Right lobe of liver (tissue), 6 donors: ENCODE measurements at regions of chr1 and their contacts with region 1.

Region 1: GRCh38 chr1:25796811-25797458 is 3.1 kb upstream of the SELENON start:
- DNase-seq: peak; percentile 86 to 87 (median 86)
- ATAC-seq: peak; percentile 68 to 81 (median 74)
- H3K4me3 ChIP-seq: no peak overlapping the region
- H3K27ac ChIP-seq: peak overlapping the region in 1 of 3 donors; percentile 54
- H3K4me1 ChIP-seq: peaks cover 0 to 10% (median 0%) of the 10 kb centered on the region in 4 donors
- H3K27me3 ChIP-seq: no peaks in the 10 kb centered on the region
- CTCF ChIP-seq: peak; percentile 67 to 86 (median 83)
- POLR2A ChIP-seq: no peak

Region 2: DNA sequence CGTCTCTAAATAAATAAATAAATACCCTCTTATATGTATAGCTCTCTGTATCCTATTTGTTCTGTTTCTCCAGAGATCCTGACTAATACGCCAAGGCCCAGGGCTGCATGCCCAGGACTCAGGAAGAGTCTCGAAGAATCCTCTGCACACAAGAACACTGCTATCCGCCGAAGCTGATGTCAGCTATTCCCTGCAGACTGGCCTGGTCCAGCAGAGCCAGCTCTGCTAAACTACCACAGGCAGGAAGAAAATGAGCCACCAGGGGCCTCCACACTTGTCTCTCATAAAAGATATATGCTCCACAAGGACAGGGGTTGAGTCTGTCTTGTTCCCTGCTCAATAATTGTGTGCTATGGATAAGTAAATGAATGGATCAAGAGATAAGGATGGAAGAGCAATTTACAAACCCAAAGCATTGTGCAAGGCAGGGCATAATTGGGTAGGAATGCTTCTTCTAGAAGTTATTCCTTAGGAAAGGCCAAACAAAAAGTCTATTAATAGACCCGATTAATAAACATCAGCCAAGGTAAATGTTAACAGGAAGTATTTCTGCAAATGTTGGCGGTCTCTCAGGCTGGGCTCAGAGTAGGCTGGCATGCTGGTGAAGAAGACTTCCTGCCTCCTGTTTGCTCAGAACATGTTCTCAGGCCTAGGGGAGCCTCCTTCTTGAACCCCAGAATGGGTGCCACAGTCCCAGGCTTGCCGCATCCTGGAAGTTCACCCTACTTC is 206.7 kb before region 1 on chr1:
- intact Hi-C with region 1: no loop called
- DNase-seq: no peak
- ATAC-seq: peak; percentile 45 to 68 (median 58)
- H3K4me3 ChIP-seq: no peak overlapping the region
- H3K27ac ChIP-seq: no peak overlapping the region
- H3K4me1 ChIP-seq: no peaks in the 10 kb centered on the region
- H3K27me3 ChIP-seq: no peaks in the 10 kb centered on the region
- CTCF ChIP-seq: peak in 1 of 4 donors; percentile 17
- POLR2A ChIP-seq: no peak

Region 3: DNA sequence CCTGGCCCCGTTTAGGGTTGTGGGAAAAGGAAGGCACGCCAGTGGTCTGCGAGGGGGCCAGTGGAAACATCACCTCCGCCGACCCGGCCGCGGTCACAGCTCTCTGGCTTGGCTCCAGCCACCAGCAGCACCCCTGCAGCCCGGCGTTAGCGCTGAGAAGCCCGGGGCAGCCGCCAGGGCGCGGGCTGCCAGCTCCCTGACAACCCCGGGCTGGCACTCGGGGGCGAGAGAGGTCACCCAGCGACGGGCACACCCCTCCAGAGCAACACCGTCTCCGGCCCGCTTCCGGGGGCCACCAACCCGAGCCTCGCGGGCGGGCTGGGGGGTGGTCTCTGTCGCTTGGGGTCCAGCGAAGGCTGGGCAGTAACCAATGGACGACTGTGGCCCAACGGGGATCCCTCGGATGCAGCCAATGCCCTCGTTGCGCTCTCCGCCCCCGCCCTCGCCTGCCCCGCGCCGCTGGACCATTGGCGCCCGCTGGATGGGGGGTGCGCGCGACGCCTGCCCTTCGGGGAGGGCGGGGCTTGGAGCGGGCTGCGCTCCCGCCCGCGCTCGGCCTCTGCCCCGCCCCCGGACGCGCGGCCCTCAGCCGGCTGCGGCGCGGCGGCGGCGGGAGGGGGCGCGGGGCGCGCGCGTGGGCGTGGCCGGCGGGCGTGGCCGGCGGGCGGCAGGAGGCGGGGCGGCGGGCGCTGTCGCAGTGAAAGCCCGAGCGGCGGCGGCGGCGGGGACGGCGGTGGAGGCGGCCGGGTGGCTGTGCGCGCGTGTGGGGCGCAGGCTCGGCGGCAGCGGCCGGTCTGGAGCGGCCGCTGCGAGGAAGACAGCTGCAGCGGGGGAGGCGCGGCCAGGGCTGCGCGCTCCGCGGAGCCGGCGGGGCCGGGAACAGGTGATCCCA is 180.6 kb before region 1 on chr1 and contains the start of gene MAN1C1:
- intact Hi-C with region 1: loop called (anchors 10 kb)
- DNase-seq: peak; percentile 92 to 93 (median 93)
- ATAC-seq: peak; percentile 91 to 95 (median 92)
- H3K4me3 ChIP-seq: peak within 1 kb of the TSS; percentile 80 to 89 (median 82)
- H3K27ac ChIP-seq: peak within 1 kb of the TSS; percentile 36 to 68 (median 65)
- H3K4me1 ChIP-seq: peaks cover 0 to 20% (median 8%) of the 10 kb centered on the region in 4 donors
- H3K27me3 ChIP-seq: no peaks in the 10 kb centered on the region
- CTCF ChIP-seq: peak; percentile 42 to 60 (median 54)
- POLR2A ChIP-seq: peak; percentile 41
- total RNA-seq, gene MAN1C1: 10.7 to 38.8 (median 21.0) TPM

Region 4: DNA sequence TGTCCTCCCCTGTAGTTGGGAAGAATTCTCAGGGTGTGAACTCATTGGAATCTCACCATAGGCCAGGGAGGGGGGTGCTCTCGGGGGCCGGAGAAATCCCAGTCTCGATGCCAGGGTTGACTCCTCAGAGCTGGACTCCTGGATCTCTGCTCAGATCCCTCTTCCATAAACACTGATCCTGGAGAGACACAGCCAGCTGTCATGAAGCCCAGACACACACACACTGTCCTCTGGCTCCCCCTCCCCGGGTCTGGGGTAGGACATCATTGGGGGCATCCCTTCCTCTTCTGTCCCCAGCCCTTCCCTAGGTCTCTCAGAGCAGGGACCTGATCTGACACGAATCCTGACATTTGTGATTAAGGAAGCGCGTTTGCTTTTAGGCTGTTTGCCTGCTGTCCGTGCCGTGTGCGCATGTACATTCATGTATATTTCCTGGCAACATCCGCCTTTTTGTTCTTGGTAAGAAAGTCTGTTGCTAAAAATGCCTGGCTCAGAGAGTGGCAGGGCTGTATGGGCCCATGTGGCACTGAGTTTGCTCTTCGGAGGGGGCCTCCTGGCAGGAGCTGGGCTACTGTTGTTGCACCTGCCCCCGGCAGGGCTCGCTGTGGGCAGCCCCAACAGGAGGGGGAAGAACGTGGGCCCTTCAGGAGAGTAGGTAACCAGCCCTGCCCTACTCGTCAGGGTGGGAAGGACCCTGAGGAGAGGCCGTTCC is 42.3 kb before region 1 on chr1:
- intact Hi-C with region 1: no loop called
- DNase-seq: no peak
- ATAC-seq: no peak
- H3K4me3 ChIP-seq: no peak overlapping the region
- H3K27ac ChIP-seq: no peak overlapping the region
- H3K4me1 ChIP-seq: no peaks in the 10 kb centered on the region
- H3K27me3 ChIP-seq: no peaks in the 10 kb centered on the region
- CTCF ChIP-seq: no peak
- POLR2A ChIP-seq: no peak

Region 5: DNA sequence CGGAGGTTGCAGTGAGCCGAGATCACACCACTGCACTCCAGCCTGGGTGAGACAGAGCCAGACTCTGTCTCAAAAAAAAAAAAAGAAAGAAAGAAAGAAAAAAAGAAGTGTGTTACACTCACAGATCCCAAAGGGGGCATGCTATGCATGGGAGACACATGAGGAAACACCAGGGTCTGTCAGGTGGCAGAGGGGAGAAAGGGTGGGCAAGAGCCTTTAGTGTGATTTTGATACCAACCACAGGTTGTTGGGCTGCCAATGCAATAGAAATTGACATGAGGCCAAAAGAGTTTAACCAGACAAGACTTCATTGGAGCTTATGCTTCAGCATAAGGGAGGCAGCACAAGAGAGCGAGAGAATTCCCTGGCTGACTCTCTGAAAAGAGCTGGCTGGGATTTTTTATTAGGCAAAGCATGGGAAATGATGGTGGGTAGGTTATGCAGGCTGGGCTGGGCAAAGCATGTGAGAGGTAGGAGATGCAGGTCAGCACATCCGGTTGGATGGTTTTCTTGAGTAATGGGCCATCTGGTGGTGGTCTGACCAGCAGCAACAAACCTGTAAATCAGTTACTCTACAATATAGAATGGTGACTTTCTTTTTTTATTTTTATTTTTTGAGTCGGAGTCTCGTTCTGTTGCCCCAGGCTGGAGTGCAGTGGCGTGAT is 213.0 kb after region 1 on chr1:
- intact Hi-C with region 1: no loop called
- DNase-seq: no peak
- ATAC-seq: no peak
- H3K4me3 ChIP-seq: no peak overlapping the region
- H3K27ac ChIP-seq: no peak overlapping the region
- H3K4me1 ChIP-seq: no peaks in the 10 kb centered on the region
- H3K27me3 ChIP-seq: no peaks in the 10 kb centered on the region
- CTCF ChIP-seq: no peak
- POLR2A ChIP-seq: no peak

Region 6: DNA sequence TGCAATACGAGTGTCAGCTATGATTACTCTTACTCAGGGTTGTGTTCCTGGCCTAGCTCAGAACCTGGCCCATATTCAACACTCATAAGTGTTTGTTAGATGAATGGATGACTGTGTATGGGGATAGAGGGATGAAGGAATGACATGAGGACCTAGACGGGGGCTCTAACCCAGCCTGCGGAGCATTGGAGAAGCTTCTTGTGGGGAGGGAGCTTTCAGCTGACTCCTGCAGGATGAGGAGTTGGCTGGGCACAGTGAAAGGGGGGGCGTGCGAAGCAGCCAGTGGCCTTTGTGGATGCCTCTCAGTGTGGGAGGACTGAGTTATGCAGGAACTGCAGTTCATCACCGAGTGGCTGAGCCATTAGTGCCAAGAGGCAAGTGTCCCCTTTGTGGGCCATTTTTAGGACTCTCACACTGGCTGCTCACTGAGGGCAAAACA is 223.4 kb after region 1 on chr1:
- intact Hi-C with region 1: no loop called
- DNase-seq: no peak
- ATAC-seq: no peak
- H3K4me3 ChIP-seq: no peak overlapping the region
- H3K27ac ChIP-seq: no peak overlapping the region
- H3K4me1 ChIP-seq: no peaks in the 10 kb centered on the region
- H3K27me3 ChIP-seq: no peaks in the 10 kb centered on the region
- CTCF ChIP-seq: no peak
- POLR2A ChIP-seq: no peak